ENCODE measurements at regions of chr15 and their contacts with region 1.

Region 1: DNA sequence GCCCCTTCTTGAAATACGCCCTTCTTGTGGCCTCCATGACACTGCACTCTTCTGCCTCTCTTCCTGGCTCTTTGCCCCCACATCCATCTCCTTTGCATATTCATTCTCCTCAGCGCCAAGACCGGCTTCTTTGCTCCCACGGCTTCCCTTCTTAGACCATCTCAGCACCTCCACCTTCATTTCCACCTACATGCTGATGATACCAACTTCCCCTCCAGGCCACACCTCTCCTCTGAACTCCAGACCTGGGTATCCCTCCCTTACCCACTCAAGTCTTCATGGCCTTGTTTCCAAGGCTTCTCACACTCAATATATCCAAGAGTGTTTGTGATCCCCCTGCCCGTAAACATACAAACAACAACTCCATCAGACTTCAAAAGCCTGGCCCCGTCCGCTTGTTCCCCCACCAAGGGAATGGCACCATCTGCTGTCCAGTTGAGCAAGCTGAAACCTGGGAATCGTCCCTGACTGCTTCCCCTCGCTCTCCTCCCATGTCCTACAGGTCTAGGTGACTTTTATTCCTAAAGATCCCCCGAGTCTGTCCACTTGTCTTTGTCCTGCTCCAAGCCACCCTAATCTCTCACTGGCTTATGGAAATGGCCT is 27.8 kb upstream of the FAM174B start:
- DNase-seq: no peak
- ATAC-seq: peak; percentile 59; the same call in 2 of the 3 replicates
- H3K4me3 ChIP-seq: no peak overlapping the region
- H3K27ac ChIP-seq: no peak overlapping the region
- H3K4me1 ChIP-seq: no peaks in the 10 kb centered on the region
- H3K27me3 ChIP-seq: no peaks in the 10 kb centered on the region
- CTCF ChIP-seq: peak; percentile 35 to 58 (median 49); a peak in 4 of 6 replicates
- EP300 ChIP-seq: no peak
- POLR2A ChIP-seq: no peak
- RAD21 ChIP-seq: peak; percentile 75

Region 2: GRCh38 chr15:92521624-92522008 is 161.7 kb before region 1 on chr15:
- CTCF ChIA-PET with region 1: interaction called, 34 read pairs
- POLR2A ChIA-PET with region 1: no interaction called
- RAD21 ChIA-PET with region 1: interaction called, 16 read pairs
- SMC1A ChIA-PET with region 1: interaction called, 38 read pairs
- in situ Hi-C with region 1: no loop called
- intact Hi-C with region 1: loop called (anchors 1 kb)
- DNase-seq: peak; percentile 37
- ATAC-seq: peak; percentile 97
- H3K4me3 ChIP-seq: no peak overlapping the region
- H3K27ac ChIP-seq: no peak overlapping the region
- H3K4me1 ChIP-seq: no peaks in the 10 kb centered on the region
- H3K27me3 ChIP-seq: no peaks in the 10 kb centered on the region
- CTCF ChIP-seq: peak; percentile 72 to 87 (median 75)
- EP300 ChIP-seq: no peak
- POLR2A ChIP-seq: no peak
- RAD21 ChIP-seq: peak; percentile 88

Region 3: GRCh38 chr15:92611993-92612745 is 71.2 kb before region 1 on chr15:
- CTCF ChIA-PET with region 1: interaction called, 32 read pairs
- POLR2A ChIA-PET with region 1: no interaction called
- RAD21 ChIA-PET with region 1: interaction called, 6 read pairs
- SMC1A ChIA-PET with region 1: interaction called, 10 read pairs
- in situ Hi-C with region 1: no loop called
- intact Hi-C with region 1: no loop called
- DNase-seq: no peak
- ATAC-seq: peak; percentile 82
- H3K4me3 ChIP-seq: no peak overlapping the region
- H3K27ac ChIP-seq: no peak overlapping the region
- H3K4me1 ChIP-seq: no peaks in the 10 kb centered on the region
- H3K27me3 ChIP-seq: no peaks in the 10 kb centered on the region
- CTCF ChIP-seq: peak; percentile 25 to 60 (median 36); a peak in 4 of 6 replicates
- EP300 ChIP-seq: no peak
- POLR2A ChIP-seq: no peak
- RAD21 ChIP-seq: peak; percentile 70

Region 4: DNA sequence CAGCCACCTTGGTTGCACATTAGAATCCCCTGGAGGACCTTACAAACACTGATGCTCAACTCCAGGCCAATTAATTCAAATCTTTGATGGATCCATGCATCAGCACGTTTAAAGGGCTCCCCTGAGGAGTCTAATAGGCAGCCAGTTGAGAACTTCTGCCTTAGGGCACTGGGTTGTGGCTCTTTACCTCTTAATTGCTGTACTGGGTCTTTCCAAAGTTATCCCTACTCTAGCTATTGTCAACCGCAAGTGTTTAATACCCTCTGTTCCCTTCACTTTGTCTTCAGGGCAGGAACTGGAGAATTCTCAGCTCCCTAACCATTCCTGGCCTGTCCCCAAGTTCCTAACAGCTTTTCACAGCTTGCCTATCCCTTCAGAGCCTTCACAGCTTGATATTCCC is 12.7 kb before region 1 on chr15:
- CTCF ChIA-PET with region 1: interaction called, 5 read pairs
- POLR2A ChIA-PET with region 1: interaction called, 6 read pairs
- RAD21 ChIA-PET with region 1: no interaction called
- SMC1A ChIA-PET with region 1: interaction called, 19 read pairs
- in situ Hi-C with region 1: no loop called
- intact Hi-C with region 1: no loop called
- DNase-seq: no peak
- ATAC-seq: no peak
- H3K4me3 ChIP-seq: no peak overlapping the region
- H3K27ac ChIP-seq: no peak overlapping the region
- H3K4me1 ChIP-seq: peaks cover 2% of the 10 kb centered on the region
- H3K27me3 ChIP-seq: no peaks in the 10 kb centered on the region
- CTCF ChIP-seq: no peak
- EP300 ChIP-seq: no peak
- POLR2A ChIP-seq: no peak
- RAD21 ChIP-seq: no peak

Region 5: GRCh38 chr15:92788196-92788595 is 104.9 kb after region 1 on chr15:
- CTCF ChIA-PET with region 1: no interaction called
- POLR2A ChIA-PET with region 1: no interaction called
- RAD21 ChIA-PET with region 1: no interaction called
- SMC1A ChIA-PET with region 1: no interaction called
- in situ Hi-C with region 1: no loop called
- intact Hi-C with region 1: no loop called
- DNase-seq: no peak
- ATAC-seq: no peak
- H3K4me3 ChIP-seq: no peak overlapping the region
- H3K27ac ChIP-seq: no peak overlapping the region
- H3K4me1 ChIP-seq: no peaks in the 10 kb centered on the region
- H3K27me3 ChIP-seq: no peaks in the 10 kb centered on the region; a peak in 1 of 4 replicates
- CTCF ChIP-seq: no peak
- EP300 ChIP-seq: no peak
- POLR2A ChIP-seq: no peak
- RAD21 ChIP-seq: no peak